Right ventricle myocardium inferior (tissue), 1 donor: ENCODE measurements at regions of chr3 and their contacts with region 1.

Region 1: GRCh38 chr3:61561374-61562041 is at the start of gene PTPRG:
- DNase-seq: peak; percentile 92
- ATAC-seq: peak; percentile 83
- total RNA-seq, gene PTPRG: 34.1 TPM

Region 2: DNA sequence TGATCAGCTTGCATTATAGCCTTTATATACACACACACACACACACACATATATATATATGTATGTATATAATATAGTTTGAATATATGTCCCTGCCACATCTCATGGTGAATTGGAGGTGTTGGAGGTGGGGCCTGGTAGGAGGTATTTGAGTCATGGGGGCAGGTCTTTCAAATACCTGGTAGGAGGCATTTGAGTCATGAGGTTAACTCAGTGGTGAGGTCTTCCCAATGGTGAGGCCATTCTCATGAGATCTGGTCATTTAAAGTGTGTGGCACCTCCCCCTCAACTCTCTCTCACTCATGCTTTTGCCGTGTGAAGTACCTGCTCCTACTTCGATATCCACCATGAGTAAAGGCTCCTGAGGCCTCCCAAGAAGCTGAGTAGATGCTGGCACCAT is 282.8 kb before region 1 on chr3:
- intact Hi-C with region 1: no loop called
- DNase-seq: no peak
- ATAC-seq: no peak

Region 3: DNA sequence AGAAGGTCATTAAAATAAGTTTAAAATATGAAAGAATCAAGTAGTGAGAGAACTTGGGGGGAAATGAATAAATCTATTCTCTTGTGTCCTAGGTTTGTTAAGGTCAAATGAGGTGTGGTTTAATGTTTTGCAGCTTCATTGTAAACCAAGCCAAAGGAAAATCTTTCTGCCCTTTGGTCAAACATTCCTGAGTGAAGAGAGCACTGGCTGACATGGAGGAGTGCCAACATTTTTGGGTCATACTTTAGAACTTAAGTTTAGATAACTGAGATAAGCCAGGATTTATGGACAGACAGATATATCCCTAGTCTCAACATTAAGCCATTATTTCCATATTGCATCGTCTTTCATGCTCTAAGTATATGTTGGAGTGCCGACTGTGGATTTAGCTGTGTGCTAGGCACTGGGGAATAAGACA is 66.3 kb after region 1 on chr3:
- intact Hi-C with region 1: no loop called
- DNase-seq: no peak
- ATAC-seq: peak; percentile 32

Region 4: DNA sequence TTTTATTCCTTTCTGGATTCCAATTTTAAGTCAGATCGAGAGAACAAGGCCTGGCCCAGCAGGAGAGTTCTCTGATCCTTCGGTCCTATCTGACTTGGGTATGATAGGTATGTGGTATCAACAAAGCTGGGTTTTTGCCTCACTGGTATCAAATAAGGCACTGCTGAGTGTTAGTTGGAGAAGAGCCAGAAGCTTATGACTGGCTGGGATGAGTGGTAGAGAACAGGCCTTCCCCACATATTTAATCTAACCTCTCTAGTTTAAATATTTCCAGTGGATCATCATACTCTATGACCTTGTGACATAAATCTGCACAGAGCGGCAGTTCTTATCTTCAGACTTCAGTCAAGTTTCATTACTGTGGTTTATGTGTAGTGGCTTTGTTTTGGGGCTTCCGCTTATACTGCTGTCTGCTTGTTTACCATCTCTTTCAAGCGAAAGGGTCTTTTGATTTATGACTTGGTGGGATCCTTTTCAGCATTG is 164.4 kb after region 1 on chr3:
- intact Hi-C with region 1: loop called (anchors 5 kb)
- DNase-seq: no peak
- ATAC-seq: peak; percentile 88

Region 5: GRCh38 chr3:61807865-61808276 is 246.4 kb after region 1 on chr3:
- intact Hi-C with region 1: loop called (anchors 5 kb)
- DNase-seq: no peak
- ATAC-seq: peak; percentile 42

Region 6: GRCh38 chr3:61847784-61848462 is 286.4 kb after region 1 on chr3:
- intact Hi-C with region 1: loop called (anchors 2 kb)
- DNase-seq: peak; percentile 82
- ATAC-seq: peak; percentile 94

Region 7: GRCh38 chr3:62159709-62160092 is 598.2 kb after region 1 on chr3:
- intact Hi-C with region 1: loop called (anchors 5 kb)
- DNase-seq: peak; percentile 77
- ATAC-seq: peak; percentile 96

Region 8: GRCh38 chr3:62188681-62189383 is 627.3 kb after region 1 on chr3:
- intact Hi-C with region 1: loop called (anchors 2 kb)
- DNase-seq: peak; percentile 81
- ATAC-seq: peak; percentile 47